ENCODE measurements at regions of chr11 and their contacts with region 1.

Region 1: GRCh38 chr11:12043959-12044819 is 35.8 kb upstream of the DKK3 start:
- DNase-seq: peak; percentile 90

Region 2: GRCh38 chr11:11798586-11799438 is 245.4 kb before region 1 on chr11:
- intact Hi-C with region 1: loop called (anchors 2 kb)
- DNase-seq: no peak

Region 3: GRCh38 chr11:11931461-11932055 is 112.6 kb before region 1 on chr11:
- intact Hi-C with region 1: loop called (anchors 1 kb)
- DNase-seq: no peak

Region 4: DNA sequence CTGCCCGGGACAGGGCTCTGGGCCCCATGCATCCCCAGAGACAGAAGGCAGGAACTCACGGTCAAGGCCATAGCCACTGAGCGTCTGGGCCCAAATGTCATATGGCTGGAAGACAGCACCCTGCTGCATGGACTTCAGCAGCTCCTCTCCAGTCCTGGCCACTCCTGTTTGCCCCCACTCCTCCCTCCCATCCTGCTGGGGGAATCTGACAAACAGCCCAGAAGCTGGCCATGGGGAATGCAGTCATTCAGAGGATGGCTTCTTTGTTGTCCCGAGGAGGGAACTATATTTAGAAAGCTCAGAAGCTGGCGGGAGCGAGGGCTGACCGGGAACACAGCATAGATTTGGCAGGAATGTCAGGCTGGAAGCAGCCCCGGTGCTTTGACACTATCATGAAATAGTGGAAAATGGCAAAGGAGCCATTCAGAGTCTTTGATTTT is 70.8 kb before region 1 on chr11:
- intact Hi-C with region 1: loop called (anchors 2 kb)
- DNase-seq: peak; percentile 89

Region 5: DNA sequence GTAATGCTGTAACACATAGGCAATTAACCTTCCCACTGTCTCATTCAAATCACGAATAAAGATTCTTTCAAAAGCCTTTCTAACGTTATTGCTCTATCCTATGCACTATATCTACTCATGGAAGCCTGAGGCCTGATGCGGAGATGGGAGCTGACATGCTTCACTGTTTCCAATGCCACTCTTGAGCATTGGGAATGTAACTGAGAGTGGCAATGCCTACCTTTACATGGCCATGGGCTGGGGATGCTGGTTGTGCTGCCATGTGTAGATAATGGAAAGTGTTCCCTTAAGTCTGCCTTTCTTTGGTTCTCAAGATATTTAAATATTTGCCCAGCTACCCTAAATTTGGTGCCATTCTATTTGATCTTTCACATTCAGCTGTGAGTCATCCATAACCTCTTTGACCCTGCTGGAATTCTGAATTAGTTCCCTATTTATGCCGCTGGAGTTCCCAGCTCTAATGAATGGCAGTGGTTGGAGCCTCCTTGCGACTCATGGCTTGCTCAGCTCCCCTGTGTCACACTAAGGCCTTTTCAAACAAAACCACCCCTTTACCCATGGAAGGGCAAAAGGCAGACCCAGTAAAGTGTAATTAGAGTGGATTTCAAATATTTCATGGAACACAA is 14.3 kb before region 1 on chr11:
- intact Hi-C with region 1: no loop called
- DNase-seq: no peak

Region 6: GRCh38 chr11:12159351-12160099 is 115.3 kb after region 1 on chr11:
- intact Hi-C with region 1: no loop called
- DNase-seq: no peak

Region 7: GRCh38 chr11:12235947-12236743 is 192.0 kb after region 1 on chr11:
- intact Hi-C with region 1: loop called (anchors 2 kb)
- DNase-seq: no peak

Region 8: DNA sequence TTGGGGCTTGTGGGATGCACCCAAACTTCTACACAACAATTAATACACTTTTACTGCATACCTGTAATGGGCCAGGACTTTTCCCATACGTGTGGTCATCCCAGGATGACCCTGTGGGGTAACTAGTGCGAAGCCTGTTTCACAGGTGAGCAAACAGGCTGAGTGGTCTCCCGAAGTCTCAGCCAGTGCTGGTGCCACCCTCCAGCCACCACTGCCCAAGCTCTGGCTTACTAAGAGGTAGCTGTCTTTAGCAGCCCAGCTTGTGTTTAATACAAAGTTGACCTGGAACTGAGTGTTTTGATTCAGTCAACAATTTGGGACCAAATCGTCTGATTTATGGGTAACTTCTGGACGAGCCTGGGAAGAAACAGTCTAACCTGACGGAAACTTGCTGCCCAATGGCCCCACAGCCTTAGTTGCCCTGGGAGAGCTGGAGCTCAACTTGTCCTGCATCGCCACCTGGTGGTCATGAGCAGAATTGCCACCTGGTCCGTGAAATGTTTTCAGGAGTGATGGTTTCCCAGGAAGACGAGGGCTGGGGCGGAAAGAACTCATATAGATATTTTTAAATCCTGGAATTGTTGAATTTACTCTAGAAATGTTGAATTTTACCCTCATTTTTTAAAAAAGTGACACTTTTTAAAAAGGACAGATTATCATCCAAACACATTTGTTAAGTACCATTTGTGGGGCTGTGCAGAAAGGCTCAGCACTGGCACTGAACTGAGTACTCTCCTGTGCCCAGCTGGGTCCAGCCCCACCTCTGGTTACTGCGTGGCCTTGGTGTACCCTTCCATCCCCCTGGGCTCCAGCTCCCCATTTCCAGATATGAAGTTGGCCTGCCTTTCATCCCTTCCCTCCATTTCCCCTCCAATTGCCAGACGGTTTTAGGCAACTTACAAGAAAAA is 237.6 kb after region 1 on chr11:
- intact Hi-C with region 1: loop called (anchors 1 kb)
- DNase-seq: peak; percentile 92

Measured in cardiac septum (tissue), 1 donor.